ENCODE measurements at regions of chr11 and their contacts with region 1.

Region 1: DNA sequence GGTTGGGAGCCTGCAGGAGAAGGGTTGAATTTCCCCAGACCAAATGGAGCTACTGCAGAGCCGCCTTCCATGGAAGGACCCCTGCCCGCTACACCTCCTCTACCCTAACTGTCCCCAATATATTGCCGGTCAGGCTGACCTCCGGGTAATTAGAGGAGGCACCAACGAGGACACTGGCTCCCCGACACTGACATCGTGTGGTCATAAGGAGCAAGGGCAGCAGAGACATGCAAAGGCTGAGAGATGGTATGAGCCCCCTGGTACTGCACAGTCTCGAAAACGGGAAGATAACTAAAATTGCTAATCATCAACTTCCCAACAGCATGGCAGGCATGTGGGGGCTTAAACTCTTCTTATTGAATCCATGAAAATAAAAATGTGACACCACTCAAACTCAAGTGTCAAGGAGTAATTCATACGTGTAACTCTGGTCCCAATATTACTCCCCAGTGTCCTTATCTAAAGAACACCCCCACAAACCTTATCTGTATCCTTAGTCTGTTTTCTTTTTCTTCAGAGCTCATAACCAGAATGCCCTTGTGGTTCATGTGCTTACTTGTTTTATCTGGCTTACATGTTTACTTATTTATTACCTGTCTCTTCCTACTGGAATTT is 4.4 kb downstream of the CAVIN3 start:
- DNase-seq: peak; percentile 61 to 68
- H3K4me3 ChIP-seq: no peak overlapping the region
- H3K4me3 Mint-ChIP-seq: no peak overlapping the region
- H3K27ac Mint-ChIP-seq: no peak overlapping the region
- H3K4me1 ChIP-seq: 0 out of 2 replicates have a peak, but pooled peaks cover 6% of the 10 kb centered on the region
- H3K4me1 Mint-ChIP-seq: peaks cover 9% of the 10 kb centered on the region
- H3K27me3 ChIP-seq: no peaks in the 10 kb centered on the region
- H3K27me3 Mint-ChIP-seq: peaks cover 4% of the 10 kb centered on the region
- CTCF ChIP-seq: peak; percentile 86 to 96

Region 2: DNA sequence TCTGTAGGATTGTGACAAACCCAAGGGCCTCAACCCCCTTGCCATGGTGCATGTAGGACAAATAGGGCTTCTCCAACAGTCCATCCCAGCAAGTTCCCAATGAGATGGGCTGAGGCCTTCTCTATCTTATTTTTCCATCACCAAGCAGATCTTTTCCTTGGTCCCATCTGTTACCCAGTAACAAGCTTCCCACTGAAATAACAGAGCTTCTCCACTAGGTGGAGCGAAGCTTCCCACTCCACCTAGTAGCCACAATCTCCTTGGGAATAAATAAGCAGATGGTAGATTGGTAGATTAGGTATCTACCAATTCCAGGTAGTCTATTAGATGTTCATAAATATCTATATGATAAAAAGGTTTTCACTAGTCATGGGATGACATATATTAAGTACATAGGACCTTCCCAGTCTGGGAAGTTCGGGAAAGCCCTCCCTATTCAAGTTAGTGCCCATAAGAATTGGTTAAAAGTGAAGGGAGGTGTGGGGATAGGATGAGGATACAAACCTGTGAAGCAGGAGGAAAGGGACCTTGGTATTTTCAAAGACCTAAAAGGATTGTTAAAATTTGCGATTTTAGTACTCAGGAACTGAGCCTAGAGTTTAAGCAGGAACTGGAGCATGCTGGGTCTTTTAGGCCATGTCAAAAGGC is 323.2 kb before region 1 on chr11:
- CTCF ChIA-PET with region 1: no interaction called
- POLR2A ChIA-PET with region 1: no interaction called
- intact Hi-C with region 1: loop called (anchors 1 kb)
- DNase-seq: peak in 1 of 2 experiments; percentile 25
- H3K4me3 ChIP-seq: no peak overlapping the region
- H3K4me3 Mint-ChIP-seq: no peak overlapping the region
- H3K27ac Mint-ChIP-seq: no peak overlapping the region
- H3K4me1 ChIP-seq: no peaks in the 10 kb centered on the region
- H3K4me1 Mint-ChIP-seq: no peaks in the 10 kb centered on the region
- H3K27me3 ChIP-seq: no peaks in the 10 kb centered on the region
- H3K27me3 Mint-ChIP-seq: peaks cover 8% of the 10 kb centered on the region
- CTCF ChIP-seq: peak; percentile 65 to 74

Region 3: DNA sequence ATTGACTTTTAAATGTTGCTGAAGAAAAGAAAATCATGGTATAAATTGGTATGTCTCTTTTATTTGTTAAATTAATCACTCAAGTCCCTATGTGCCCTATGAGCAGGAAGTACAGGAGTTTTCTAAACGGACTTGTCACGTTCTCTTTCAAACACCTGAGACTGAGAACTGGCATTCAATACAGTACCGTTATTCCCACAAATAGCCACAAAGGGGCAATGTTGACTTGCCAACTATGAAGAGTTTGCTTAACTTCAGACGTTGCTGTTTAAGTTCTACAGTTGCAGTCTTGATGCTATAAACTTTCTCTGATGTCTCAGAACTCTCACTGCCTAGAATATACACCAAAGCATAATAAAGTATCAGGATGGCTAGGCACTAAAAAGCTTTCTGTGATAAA is 293.0 kb before region 1 on chr11:
- CTCF ChIA-PET with region 1: no interaction called
- POLR2A ChIA-PET with region 1: no interaction called
- intact Hi-C with region 1: loop called (anchors 1 kb)
- DNase-seq: peak in 1 of 2 experiments; percentile 34
- H3K4me3 ChIP-seq: no peak overlapping the region
- H3K4me3 Mint-ChIP-seq: no peak overlapping the region
- H3K27ac Mint-ChIP-seq: no peak overlapping the region
- H3K4me1 ChIP-seq: no peaks in the 10 kb centered on the region
- H3K4me1 Mint-ChIP-seq: no peaks in the 10 kb centered on the region
- H3K27me3 ChIP-seq: no peaks in the 10 kb centered on the region
- H3K27me3 Mint-ChIP-seq: peaks cover 14% of the 10 kb centered on the region
- CTCF ChIP-seq: peak; percentile 51 to 52

Region 4: DNA sequence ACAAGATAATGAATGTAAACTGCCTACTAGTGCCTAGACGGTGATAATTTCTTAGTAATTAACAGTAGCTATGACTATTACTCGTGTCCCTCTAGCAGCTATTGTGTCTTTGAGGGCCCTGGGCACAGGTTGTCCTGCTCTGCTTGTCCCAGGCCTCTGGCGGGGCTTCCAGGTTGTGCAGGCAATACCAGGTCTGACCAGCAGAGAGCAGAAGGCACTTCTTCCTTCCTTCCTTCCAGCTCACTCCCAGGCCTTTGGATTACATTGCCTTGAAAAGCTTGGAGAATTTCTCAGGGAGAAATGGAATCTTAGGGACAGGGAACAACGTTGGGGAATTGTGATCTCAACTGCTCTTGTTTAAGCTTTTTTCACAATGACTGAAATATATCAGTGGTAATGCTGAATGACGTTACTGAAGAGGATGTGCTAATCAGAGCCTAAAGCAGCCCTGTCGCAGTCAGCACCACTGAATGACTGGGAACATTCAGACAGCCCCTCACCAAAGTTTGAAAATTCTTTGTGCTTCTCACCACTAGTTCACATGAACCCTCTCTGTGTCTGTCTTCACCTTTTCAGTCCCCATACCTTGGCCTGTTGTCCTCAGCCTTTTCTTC is 64.7 kb before region 1 on chr11:
- CTCF ChIA-PET with region 1: interaction called, 5 read pairs
- POLR2A ChIA-PET with region 1: no interaction called
- intact Hi-C with region 1: loop called (anchors 1 kb)
- DNase-seq: peak; percentile 81 to 83
- H3K4me3 ChIP-seq: no peak overlapping the region
- H3K4me3 Mint-ChIP-seq: no peak overlapping the region
- H3K27ac Mint-ChIP-seq: no peak overlapping the region
- H3K4me1 ChIP-seq: peaks cover 15% of the 10 kb centered on the region
- H3K4me1 Mint-ChIP-seq: peaks cover 17% of the 10 kb centered on the region
- H3K27me3 ChIP-seq: no peaks in the 10 kb centered on the region
- H3K27me3 Mint-ChIP-seq: no peaks in the 10 kb centered on the region
- CTCF ChIP-seq: peak; percentile 69 to 91

Region 5: DNA sequence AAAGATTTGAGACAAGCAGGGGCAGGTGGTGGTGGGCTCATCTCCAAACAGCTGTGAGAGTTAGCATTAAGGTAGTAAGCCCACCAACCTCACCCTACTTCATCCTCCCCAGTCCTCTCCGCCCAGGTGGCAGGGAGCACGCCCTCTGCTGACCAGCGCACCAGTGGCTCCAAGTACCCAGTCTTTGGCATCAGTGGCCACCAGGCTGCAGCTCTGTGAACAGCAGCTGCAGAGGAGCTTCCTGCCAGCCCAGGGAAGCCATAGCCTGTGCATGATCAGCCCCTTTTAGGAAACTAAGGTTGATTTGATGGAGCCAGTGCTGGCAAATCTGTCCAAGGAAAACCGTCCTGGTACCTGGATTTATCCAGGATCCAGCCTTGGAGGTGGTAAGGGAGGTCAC is 17.3 kb before region 1 on chr11:
- CTCF ChIA-PET with region 1: interaction called, 7 read pairs
- POLR2A ChIA-PET with region 1: no interaction called
- intact Hi-C with region 1: loop called (anchors 1 kb)
- DNase-seq: peak; percentile 72 to 76
- H3K4me3 ChIP-seq: no peak overlapping the region
- H3K4me3 Mint-ChIP-seq: no peak overlapping the region
- H3K27ac Mint-ChIP-seq: no peak overlapping the region
- H3K4me1 ChIP-seq: no peaks in the 10 kb centered on the region
- H3K4me1 Mint-ChIP-seq: no peaks in the 10 kb centered on the region
- H3K27me3 ChIP-seq: no peaks in the 10 kb centered on the region
- H3K27me3 Mint-ChIP-seq: no peaks in the 10 kb centered on the region
- CTCF ChIP-seq: peak; percentile 75 to 96